ENCODE measurements at regions of chr17 and their contacts with region 1.

Region 1: GRCh38 chr17:76397687-76398487 is 13.5 kb downstream of the SPHK1 start:
- H3K4me3 ChIP-seq: no peak overlapping the region
- H3K27ac ChIP-seq: no peak overlapping the region
- H3K4me1 ChIP-seq: no peaks in the 10 kb centered on the region
- CTCF ChIP-seq: peak; percentile 86

Region 2: GRCh38 chr17:76312735-76313134 is 85.2 kb before region 1 on chr17:
- CTCF ChIA-PET with region 1: interaction called, 244 read pairs
- POLR2A ChIA-PET with region 1: no interaction called
- H3K4me3 ChIP-seq: no peak overlapping the region
- H3K27ac ChIP-seq: no peak overlapping the region
- H3K4me1 ChIP-seq: no peaks in the 10 kb centered on the region
- CTCF ChIP-seq: no peak

Region 3: GRCh38 chr17:76353599-76354316 is 44.1 kb before region 1 on chr17 and contains the start of gene PRPSAP1:
- CTCF ChIA-PET with region 1: interaction called, 25 read pairs
- POLR2A ChIA-PET with region 1: interaction called, 6 read pairs
- H3K4me3 ChIP-seq: peak within 1 kb of the TSS; percentile 90
- H3K27ac ChIP-seq: peak within 1 kb of the TSS; percentile 96
- H3K4me1 ChIP-seq: peaks cover 12% of the 10 kb centered on the region; the same call in 1 of the 2 replicates
- CTCF ChIP-seq: peak; percentile 69

Region 4: DNA sequence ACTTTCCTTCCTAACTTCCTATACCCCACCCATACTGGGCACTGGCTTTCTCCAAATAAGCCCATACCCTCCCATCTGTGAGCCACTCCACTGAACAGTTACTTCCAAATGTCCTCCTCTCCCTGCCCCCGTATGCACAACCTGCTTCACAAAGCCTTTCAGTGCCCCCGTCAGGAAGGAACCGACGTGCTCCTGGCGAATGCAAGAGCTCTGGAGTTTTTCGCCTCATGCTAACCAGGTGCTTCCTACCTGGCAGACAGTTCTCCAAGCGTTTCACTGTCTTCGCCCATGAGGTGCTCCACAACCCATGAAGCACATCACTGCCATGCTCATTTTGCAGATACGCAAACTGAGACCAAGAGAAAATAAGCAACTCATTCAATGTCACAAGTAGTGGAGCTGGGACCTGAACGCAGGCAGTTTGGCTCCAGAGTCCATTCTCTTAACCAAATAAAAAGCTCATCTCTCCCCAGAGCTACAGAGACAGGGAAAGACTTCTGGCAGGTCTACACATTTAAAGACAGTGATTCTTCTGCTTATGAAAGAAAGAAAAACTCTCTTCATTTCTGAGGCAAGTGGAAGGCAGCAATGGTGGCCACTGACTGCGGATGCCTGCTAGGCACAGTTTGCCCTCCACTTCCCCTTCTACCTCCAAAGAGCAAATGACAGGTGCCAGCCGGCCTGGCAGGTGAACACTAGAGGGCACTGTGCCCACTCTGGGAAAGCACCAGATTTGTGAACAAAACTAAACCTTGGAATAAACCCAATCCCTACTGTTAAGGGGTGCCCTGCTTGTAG is 10.4 kb after region 1 on chr17:
- CTCF ChIA-PET with region 1: interaction called, 90 read pairs
- POLR2A ChIA-PET with region 1: no interaction called
- H3K4me3 ChIP-seq: no peak overlapping the region
- H3K27ac ChIP-seq: no peak overlapping the region
- H3K4me1 ChIP-seq: peaks cover 10% of the 10 kb centered on the region
- CTCF ChIP-seq: peak; percentile 59

Region 5: DNA sequence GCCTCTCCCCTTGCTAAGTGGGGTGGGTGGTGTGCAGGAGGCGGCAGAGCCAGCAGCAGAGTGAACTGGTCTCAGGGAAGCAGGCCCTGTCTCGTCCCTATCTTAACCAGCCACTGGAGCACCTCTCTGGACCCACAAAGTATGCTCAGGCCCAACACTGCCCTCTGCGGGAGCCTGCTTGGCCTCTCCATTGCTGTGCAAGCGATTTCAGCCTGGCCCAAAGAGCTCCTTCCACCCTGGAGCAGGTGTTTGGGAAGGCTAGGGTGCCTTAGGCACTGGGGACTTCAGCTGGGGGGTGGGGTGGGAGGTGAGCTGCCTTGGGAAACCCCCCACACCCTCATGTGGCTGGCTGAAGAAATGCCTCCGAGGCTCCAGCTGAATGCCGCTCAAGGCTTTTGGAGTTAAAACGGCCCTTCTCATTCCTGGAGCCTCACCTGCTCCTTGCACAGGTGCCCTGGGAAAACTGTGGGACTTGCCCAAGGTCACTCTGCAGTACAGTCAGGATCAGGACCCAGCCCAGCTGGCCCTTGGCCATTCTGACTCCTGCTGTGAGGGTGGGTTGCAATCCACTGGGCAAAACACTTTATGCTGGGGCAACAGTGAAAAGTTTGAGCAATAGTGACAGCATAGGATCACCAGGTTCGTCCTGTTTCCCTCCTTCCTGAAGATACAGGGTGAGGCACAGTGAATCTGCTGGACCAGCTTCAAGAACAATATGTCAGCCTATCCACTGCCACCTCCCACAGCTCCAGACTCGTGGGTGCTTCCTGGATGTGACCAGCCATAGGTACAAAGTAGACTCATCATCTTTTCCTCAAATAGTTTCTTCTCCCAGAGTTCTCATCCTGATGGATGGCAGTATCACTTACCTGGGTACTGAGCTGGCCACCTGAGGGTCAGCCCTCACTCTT is 60.9 kb after region 1 on chr17:
- CTCF ChIA-PET with region 1: interaction called, 14 read pairs
- POLR2A ChIA-PET with region 1: no interaction called
- H3K4me3 ChIP-seq: no peak overlapping the region
- H3K27ac ChIP-seq: no peak overlapping the region
- H3K4me1 ChIP-seq: no peaks in the 10 kb centered on the region
- CTCF ChIP-seq: peak; percentile 79

Region 6: GRCh38 chr17:76612977-76613851 is 215.3 kb after region 1 on chr17:
- CTCF ChIA-PET with region 1: no interaction called
- POLR2A ChIA-PET with region 1: no interaction called
- H3K4me3 ChIP-seq: no peak overlapping the region
- H3K27ac ChIP-seq: no peak overlapping the region
- H3K4me1 ChIP-seq: 0 out of 2 replicates have a peak, but pooled peaks cover 3% of the 10 kb centered on the region
- CTCF ChIP-seq: no peak

Measured in HEK293 (cell line).